ENCODE measurements at regions of chr11 and their contacts with region 1.

Region 1: GRCh38 chr11:126122863-126123262 is 60.2 kb upstream of the CDON start:
- DNase-seq: no peak
- ATAC-seq: no peak
- H3K4me3 ChIP-seq: no peak overlapping the region
- H3K27ac ChIP-seq: peak overlapping the region in 1 of 12 donors; percentile 75
- H3K4me1 ChIP-seq: peaks cover 0 to 8% (median 0%) of the 10 kb centered on the region in 12 donors
- H3K27me3 ChIP-seq: no peaks in the 10 kb centered on the region
- CTCF ChIP-seq: no peak
- POLR2A ChIP-seq: no peak

Region 2: GRCh38 chr11:126147208-126148111 is 24.6 kb after region 1 on chr11:
- intact Hi-C with region 1: loop called in 1 of 10 experiments (anchors 1 kb)
- DNase-seq: no peak
- ATAC-seq: no peak
- H3K4me3 ChIP-seq: no peak overlapping the region
- H3K27ac ChIP-seq: no peak overlapping the region
- H3K4me1 ChIP-seq: peaks cover 0 to 8% (median 0%) of the 10 kb centered on the region in 12 donors
- H3K27me3 ChIP-seq: no peaks in the 10 kb centered on the region
- CTCF ChIP-seq: no peak
- POLR2A ChIP-seq: no peak